Head of caudate nucleus (tissue), 42 donors: ENCODE measurements at regions of chr9 and their contacts with region 1.

Region 1: GRCh38 chr9:89522261-89522958 is 24.5 kb upstream of the SEMA4D start:
- DNase-seq: peak in 6 of 42 donors; percentile 24 to 48 (median 40)

Region 2: GRCh38 chr9:89442981-89443814 is 79.2 kb before region 1 on chr9:
- intact Hi-C with region 1: loop called (anchors 10 kb)
- DNase-seq: no peak